ENCODE measurements at regions of chr3 and their contacts with region 1.

Region 1: DNA sequence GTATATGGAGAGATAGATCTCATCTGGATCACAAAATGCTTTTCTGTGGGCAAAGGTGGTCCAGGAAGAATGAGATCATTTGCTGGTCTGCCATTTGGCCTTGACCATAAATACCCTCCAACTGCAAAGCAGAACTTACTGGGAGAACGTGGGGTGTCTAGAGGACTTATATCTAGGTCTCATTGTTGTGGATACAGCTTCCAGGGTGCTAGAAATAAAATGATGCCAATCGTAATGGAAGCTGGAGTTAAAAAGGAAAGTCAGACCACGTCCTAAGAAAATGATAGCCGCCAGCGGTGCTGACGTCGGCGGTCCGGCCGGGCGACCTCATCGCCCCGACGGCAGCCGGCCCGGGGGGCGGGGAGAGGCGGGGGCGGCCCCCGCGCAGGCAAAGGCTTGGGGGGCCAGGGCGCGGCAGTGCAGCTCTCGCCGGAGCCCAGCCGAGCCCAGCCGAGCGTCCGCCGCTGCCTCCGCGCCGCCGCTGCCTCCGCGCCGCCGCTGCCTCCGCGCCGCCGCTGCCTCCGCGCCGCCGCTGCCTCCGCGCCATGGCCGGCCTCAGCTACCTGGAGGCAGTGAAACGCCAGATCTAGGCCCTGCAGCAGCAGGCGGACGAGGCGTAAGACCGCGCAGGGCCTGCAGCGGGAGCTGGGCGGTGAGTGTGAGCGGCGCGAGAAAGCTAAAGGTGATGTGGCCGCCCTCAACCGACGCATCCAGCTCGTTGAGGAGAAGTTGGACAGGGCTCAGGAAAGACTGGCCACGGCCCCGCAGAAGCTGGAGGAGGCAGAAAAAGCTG is 89.5 kb downstream of the EOMES start:
- DNase-seq: peak; percentile 49
- ATAC-seq: peak; percentile 86
- H3K4me3 Mint-ChIP-seq: peak overlapping the region; percentile 83
- H3K27ac Mint-ChIP-seq: peak overlapping the region; percentile 90
- H3K4me1 Mint-ChIP-seq: peaks cover 36% of the 10 kb centered on the region
- H3K27me3 Mint-ChIP-seq: no peaks in the 10 kb centered on the region

Region 2: GRCh38 chr3:27484015-27484844 is 148.4 kb before region 1 on chr3 and contains the start of gene SLC4A7:
- CTCF ChIA-PET with region 1: interaction called, 3 read pairs
- POLR2A ChIA-PET with region 1: interaction called, 12 read pairs
- DNase-seq: peak; percentile 98
- ATAC-seq: peak; percentile 94
- H3K4me3 Mint-ChIP-seq: peak within 1 kb of the TSS; percentile 100
- H3K27ac Mint-ChIP-seq: peak within 1 kb of the TSS; percentile 98
- H3K4me1 Mint-ChIP-seq: peaks cover 39% of the 10 kb centered on the region
- H3K27me3 Mint-ChIP-seq: no peaks in the 10 kb centered on the region
- total RNA-seq, gene SLC4A7: 31.9 to 32.9 TPM

Region 3: DNA sequence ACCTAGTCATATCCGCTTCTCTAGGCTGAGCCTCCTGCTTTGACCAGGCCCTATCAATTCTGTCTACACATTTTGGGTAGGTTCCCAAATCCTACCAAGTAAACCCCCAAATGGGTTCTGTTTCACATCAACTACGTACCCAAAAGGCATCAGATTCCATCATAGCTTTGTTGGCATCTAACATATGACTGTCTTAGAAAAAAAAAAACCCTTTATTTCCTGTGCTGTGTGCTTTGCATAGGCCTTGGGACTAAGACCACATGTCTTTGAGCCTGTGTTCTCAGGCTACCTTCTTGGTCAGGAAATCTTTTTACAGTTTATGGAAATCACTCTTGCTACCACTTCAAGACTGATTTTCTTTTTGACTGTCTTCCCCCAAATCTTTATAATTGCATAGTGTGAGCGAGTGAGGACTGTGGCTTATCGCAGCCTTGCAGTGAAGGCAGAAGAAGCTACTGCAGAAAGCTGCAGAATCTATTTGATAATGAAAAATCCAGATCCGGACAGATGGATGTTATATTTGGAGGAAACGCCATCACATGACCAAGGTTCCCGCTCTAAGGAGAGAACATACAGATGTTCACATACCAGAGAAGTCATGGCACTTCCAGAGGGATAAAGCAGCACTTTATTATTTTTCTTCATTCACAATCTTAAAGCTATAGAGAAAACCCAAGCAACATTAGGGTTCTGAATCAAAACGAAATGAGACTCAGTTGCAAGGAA is 21.7 kb before region 1 on chr3:
- CTCF ChIA-PET with region 1: no interaction called
- POLR2A ChIA-PET with region 1: no interaction called
- DNase-seq: no peak
- ATAC-seq: no peak
- H3K4me3 Mint-ChIP-seq: no peak overlapping the region
- H3K27ac Mint-ChIP-seq: no peak overlapping the region
- H3K4me1 Mint-ChIP-seq: no peaks in the 10 kb centered on the region
- H3K27me3 Mint-ChIP-seq: no peaks in the 10 kb centered on the region

Region 4: DNA sequence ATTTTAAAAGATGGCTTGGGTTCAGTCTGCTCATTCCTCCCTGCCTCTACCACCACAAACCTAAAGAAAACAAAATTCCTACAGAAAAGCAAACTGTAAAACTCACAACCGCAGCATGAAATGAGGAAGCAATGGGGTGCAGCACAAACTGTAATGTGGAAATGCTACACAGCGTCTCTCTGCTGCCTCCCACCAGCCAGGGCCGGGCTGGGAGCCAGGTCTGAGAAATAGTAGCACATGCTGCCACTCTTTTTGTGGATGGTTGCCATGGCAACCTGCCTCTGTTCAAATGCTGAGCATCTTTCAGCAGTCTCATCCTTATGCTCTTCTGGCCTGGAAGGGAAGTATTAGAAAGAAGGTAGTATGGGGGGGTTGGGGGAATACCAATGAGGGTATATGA is 34.1 kb after region 1 on chr3:
- CTCF ChIA-PET with region 1: no interaction called
- POLR2A ChIA-PET with region 1: no interaction called
- DNase-seq: peak; percentile 28
- ATAC-seq: no peak
- H3K4me3 Mint-ChIP-seq: no peak overlapping the region
- H3K27ac Mint-ChIP-seq: no peak overlapping the region
- H3K4me1 Mint-ChIP-seq: peaks cover 9% of the 10 kb centered on the region
- H3K27me3 Mint-ChIP-seq: peaks cover 2% of the 10 kb centered on the region

Measured in activated CD8-positive, alpha-beta T cell treated with anti-CD3 and anti-CD28 coated beads, Interleukin-2, amount 10 ng/mL, durations not matched to agents 7 days and 5 days (primary cell).